Dorsolateral prefrontal cortex (tissue), 120 donors: ENCODE measurements at regions of chrX and their contacts with region 1.

Region 1: DNA sequence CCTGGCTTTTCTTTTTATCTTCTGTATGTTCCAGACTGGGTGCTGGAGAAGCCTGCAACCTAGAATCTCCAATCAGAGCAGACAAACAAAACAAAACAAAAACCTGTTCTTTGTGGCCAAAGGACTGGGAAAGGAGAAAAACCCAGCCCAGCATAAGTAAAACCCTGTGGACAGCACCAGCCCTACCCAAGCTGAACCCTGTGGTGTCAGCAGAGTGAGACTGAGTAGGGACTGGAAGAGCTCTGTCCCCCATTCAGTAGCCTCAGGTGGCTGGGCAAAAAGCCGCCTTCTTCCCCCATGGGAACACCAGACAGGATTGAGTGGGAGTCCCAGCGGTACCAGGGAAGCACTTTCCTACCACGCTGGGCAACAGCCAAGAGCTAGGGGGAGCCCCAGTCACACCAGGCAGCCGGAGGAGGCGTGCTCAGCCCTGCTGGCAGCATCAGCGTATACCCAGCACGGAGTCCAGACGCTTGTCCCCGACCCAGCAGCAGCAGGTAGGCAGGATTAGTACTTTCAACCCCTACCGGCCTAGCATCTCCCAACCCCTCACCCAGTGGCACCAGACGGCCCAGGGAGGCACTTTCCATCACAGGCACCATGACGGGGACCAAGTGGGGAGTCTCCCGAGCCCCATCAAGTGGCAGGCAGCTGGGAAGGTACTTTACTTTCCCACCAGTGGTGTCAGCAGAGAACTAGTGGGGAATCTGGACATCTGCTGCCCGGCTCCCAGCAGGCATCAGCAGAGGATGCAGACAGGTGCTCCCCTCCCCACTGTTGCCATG is 8.6 kb upstream of the JADE3 start:
- DNase-seq: peak; percentile 46 to 86 (median 79)
- H3K4me3 ChIP-seq: peak overlapping the region; percentile 13 to 66 (median 51)
- H3K27ac ChIP-seq: peak overlapping the region in 23 of 59 donors; percentile 12 to 74 (median 48)
- H3K27me3 ChIP-seq: peaks cover 0 to 85% (median 26%) of the 10 kb centered on the region in 45 donors
- CTCF ChIP-seq: peak in 54 of 56 donors; percentile 46 to 88 (median 70)

Region 2: DNA sequence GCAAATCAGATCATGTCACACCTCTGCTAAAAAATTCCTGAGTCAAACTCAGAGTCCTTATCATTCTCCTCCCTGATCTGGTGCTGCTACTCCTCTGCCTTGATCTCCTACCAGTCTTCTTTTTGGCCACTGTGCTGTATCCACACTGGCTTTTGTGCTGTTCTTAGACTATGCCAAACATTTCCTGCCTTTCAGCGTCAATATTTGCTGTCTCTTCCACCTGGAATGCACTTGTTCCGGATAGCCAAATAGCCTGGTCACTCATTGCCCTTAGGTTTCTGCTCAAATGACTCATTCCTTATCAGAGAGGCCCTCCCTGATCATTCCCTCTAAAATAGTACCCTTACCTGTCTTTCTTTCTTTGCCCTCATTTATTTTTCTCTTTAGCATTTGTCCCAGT is 91.2 kb before region 1 on chrX:
- intact Hi-C with region 1: no loop called
- DNase-seq: no peak
- H3K4me3 ChIP-seq: no peak overlapping the region
- H3K27ac ChIP-seq: no peak overlapping the region
- H3K27me3 ChIP-seq: peaks cover 0 to 87% (median 20%) of the 10 kb centered on the region in 45 donors
- CTCF ChIP-seq: no peak

Region 3: DNA sequence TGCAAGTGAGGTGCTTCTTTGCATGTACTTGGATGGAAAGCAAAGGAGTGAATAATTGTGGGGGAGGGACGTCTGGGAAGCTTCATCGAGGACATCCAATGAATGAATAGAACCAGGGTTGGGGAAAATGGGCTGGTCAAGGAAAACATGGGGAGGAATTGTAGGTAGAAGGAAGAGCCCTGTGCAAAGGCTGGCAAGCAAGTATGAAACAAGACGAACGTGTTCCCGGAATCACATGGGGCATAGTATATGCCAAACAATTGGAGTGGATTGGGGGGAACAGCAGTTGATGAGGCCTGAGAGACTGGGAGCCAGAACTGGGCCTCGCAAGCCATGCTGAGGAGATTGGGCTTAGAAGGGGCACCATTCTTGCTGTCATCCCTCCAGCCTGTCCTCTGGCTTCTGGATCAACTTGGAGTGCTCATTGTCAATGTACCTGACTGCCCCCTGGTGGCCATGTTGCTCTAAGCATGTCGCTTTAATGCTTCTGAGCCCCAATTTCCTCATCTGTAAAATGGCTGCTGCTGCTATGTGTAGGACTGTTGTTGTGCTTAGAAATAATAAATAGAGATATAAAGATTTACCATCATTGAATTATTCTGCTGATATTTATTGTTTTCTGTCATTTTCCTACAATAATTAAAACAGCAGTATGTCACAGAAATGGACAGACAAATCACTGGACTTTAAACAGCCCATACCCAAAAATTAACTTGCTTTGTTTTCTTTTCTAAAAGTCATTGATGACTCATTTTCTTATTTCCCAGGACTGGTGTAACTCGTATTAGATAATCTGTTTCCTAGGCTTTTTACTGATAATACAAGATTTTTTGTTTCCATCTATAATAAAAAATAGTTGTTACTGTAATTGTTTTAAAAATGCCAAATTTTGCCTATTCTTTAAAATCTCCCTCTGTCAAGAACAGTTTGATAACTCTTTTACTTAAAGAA is 75.0 kb after region 1 on chrX:
- intact Hi-C with region 1: loop called in 1 of 2 experiments (anchors 5 kb)
- DNase-seq: peak in 7 of 10 donors; percentile 4 to 48 (median 29)
- H3K4me3 ChIP-seq: no peak overlapping the region
- H3K27ac ChIP-seq: no peak overlapping the region
- H3K27me3 ChIP-seq: peaks cover 0 to 41% (median 5%) of the 10 kb centered on the region in 45 donors
- CTCF ChIP-seq: peak; percentile 19 to 69 (median 49)

Region 4: DNA sequence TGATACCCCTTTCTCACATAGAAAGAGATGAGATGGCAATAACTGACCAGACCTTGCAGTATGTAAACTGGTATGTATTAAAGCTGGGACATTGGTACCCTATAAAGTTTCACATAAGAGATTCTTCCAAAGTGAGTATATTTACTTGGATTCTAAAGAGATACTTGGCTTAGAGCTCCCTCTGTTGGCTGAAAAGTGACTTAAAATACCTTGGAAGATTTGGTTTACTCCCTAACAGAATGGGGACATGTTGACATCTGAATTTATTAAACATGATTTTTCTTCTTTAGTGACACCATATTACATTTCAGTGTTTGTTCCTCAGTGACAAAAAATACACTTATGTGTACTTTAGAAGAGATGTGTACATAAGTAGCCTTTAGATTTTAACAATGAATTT is 126.7 kb after region 1 on chrX:
- intact Hi-C with region 1: loop called (anchors 2 to 5 kb)
- DNase-seq: no peak
- H3K4me3 ChIP-seq: no peak overlapping the region
- H3K27ac ChIP-seq: no peak overlapping the region
- H3K27me3 ChIP-seq: peaks cover 0 to 77% (median 17%) of the 10 kb centered on the region in 45 donors
- CTCF ChIP-seq: peak in 55 of 56 donors; percentile 45 to 86 (median 67)

Region 5: GRCh38 chrX:47093248-47093647 is 189.6 kb after region 1 on chrX:
- intact Hi-C with region 1: loop called (anchors 5 kb)
- DNase-seq: no peak
- H3K4me3 ChIP-seq: no peak overlapping the region
- H3K27ac ChIP-seq: peak overlapping the region in 5 of 59 donors; percentile 27 to 81 (median 79)
- H3K27me3 ChIP-seq: peaks cover 0 to 41% (median 4%) of the 10 kb centered on the region in 45 donors
- CTCF ChIP-seq: peak in 55 of 56 donors; percentile 35 to 76 (median 57)